Endothelial cell of umbilical vein (primary cell): ENCODE measurements at regions of chr5 and their contacts with region 1.

Region 1: GRCh38 chr5:163861670-163862069 is 356.3 kb downstream of the MAT2B start:
- DNase-seq: peak; percentile 91
- H3K4me3 ChIP-seq: no peak overlapping the region
- H3K27ac ChIP-seq: peak overlapping the region; percentile 84
- H3K4me1 ChIP-seq: peaks cover 41% of the 10 kb centered on the region
- H3K27me3 ChIP-seq: no peaks in the 10 kb centered on the region
- CTCF ChIP-seq: no peak
- POLR2A ChIP-seq: no peak

Region 2: DNA sequence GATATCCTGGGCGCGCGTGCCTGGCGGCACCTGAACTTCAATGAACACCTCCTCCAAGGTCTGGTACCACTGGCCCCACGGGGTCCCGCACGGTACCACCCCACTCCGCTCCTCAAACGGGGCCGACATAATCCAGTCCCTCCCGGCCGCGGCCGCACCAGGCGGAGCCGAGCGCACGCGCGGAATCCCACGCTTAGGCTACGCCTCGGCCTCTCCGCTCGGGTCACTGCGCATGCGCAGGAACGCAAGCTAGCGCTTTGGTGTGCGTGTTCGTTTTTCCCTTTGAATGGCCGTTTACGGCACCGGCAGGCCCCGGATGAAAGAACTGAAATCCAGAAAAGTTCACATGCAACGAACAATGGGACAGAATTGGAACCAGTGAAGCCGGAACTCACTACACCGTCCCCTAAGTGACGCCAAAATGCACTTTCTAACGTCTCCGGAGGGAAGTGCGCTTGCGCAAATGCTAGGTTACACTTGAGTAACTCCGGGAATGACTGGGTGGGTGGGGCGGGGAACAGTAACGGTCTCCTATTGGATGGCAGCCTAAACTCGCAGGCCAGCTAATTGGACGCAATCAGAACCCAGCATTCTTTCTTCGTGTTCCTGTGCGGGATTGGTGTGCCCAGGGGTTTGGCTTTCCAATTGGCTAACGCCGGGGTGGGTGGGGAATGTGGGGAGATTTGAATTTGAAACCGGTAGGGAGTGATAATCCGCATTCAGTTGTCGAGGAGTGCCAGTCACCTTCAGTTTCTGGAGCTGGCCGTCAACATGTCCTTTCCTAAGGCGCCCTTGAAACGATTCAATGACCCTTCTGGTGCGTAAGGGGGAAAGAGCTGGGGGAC is 401.5 kb before region 1 on chr5 and contains the starts of genes HMMR and NUDCD2:
- CTCF ChIA-PET with region 1: no interaction called
- POLR2A ChIA-PET with region 1: no interaction called
- dilution Hi-C with region 1: no loop called
- intact Hi-C with region 1: loop called (anchors 1 kb)
- DNase-seq: peak; percentile 99
- H3K4me3 ChIP-seq: peak within 1 kb of the TSS; percentile 85 to 96 (median 92)
- H3K27ac ChIP-seq: peak within 1 kb of the TSS; percentile 99
- H3K4me1 ChIP-seq: peaks cover 21% of the 10 kb centered on the region
- H3K27me3 ChIP-seq: no peaks in the 10 kb centered on the region
- CTCF ChIP-seq: peak in 1 of 2 donors; percentile 11
- POLR2A ChIP-seq: peak; percentile 95
- total RNA-seq, gene HMMR: 26.0 and 31.0 TPM in 2 replicates
- total RNA-seq, gene NUDCD2: 46.9 and 50.3 TPM in 2 replicates

Region 3: DNA sequence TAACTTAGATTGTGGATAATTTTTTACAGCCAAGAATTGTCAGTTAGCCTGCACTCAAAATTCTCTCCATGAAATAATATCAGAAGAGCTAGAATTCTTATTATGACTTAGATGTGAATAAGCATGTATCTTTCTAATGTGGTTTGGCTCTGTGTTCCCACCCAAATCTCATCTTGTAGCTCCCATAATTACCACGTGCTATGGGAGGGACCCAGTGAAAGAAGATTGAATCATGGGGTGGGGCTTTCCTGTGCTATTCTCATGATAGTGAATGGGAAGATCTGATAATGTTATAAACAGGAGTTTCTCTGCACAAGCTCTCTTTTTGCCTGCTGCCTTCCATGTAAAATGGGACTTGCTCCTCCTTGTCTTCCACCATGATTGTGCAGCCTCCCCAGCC is 179.4 kb before region 1 on chr5:
- CTCF ChIA-PET with region 1: no interaction called
- POLR2A ChIA-PET with region 1: no interaction called
- dilution Hi-C with region 1: no loop called
- intact Hi-C with region 1: no loop called
- DNase-seq: no peak
- H3K4me3 ChIP-seq: no peak overlapping the region
- H3K27ac ChIP-seq: no peak overlapping the region
- H3K4me1 ChIP-seq: no peaks in the 10 kb centered on the region
- H3K27me3 ChIP-seq: no peaks in the 10 kb centered on the region
- CTCF ChIP-seq: no peak
- POLR2A ChIP-seq: no peak

Region 4: GRCh38 chr5:163968651-163969050 is 107.0 kb after region 1 on chr5:
- CTCF ChIA-PET with region 1: interaction called, 3 read pairs
- POLR2A ChIA-PET with region 1: no interaction called
- dilution Hi-C with region 1: no loop called
- intact Hi-C with region 1: loop called (anchors 1 kb)
- DNase-seq: peak; percentile 14
- H3K4me3 ChIP-seq: no peak overlapping the region
- H3K27ac ChIP-seq: peak overlapping the region; percentile 35
- H3K4me1 ChIP-seq: peaks cover 8% of the 10 kb centered on the region
- H3K27me3 ChIP-seq: no peaks in the 10 kb centered on the region
- CTCF ChIP-seq: no peak
- POLR2A ChIP-seq: no peak

Region 5: GRCh38 chr5:164204338-164204946 is 342.8 kb after region 1 on chr5:
- CTCF ChIA-PET with region 1: no interaction called
- POLR2A ChIA-PET with region 1: no interaction called
- dilution Hi-C with region 1: no loop called
- intact Hi-C with region 1: loop called (anchors 5 kb)
- DNase-seq: peak; percentile 50
- H3K4me3 ChIP-seq: no peak overlapping the region
- H3K27ac ChIP-seq: peak overlapping the region; percentile 87
- H3K4me1 ChIP-seq: peaks cover 28% of the 10 kb centered on the region
- H3K27me3 ChIP-seq: no peaks in the 10 kb centered on the region
- CTCF ChIP-seq: no peak
- POLR2A ChIP-seq: no peak